ENCODE measurements at regions of chr2 and their contacts with region 1.

Region 1: DNA sequence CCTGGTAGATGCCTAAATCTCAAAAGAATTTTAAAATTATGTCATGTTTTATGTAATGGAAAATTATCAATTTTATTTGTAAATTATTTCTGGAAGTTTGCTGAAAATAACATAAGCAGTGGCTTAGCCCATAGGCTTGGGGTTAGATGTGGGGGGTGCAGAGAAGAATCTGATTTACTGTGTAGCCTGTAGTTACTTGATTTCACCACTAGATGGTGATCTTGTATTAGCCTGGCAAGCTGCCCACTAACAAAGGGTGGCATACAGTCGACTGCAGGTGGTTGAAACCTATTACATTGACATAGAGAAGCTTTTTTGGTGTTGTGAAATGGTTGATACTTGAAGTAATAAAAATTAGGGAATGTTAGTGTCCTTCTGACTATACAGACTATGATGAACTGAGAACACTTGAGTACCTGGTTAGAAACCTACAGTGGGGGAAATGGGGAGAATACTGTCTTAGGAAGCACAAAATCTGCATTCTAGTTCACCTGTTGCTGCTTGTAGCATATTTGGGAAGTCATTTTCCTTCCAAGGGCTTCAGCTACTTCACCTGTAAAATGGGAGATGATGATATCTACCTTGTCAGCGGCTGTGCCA is 191.0 kb upstream of the LHCGR start:
- DNase-seq: peak; percentile 31
- ATAC-seq: peak; percentile 74

Region 2: DNA sequence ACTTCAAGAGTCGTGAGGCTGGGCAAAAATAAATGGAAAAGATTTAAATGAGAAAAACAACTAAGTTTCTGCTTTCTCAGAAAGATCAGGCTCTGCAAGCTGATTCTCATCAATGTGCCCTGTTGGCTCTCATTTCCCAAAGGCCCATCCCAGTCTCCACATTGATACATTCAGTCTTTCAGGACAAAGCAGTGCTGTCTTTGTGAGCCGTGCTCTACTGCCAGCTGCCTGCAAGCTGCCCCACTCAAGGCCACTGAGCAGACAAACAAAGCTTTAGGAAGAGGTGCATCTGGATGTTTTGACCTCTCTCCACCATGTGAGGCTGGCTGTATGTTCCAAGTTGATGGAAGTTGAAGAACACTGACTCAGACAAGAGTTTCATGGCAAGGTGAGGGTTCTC is 159.0 kb after region 1 on chr2:
- intact Hi-C with region 1: no loop called
- DNase-seq: no peak
- ATAC-seq: no peak

Region 3: DNA sequence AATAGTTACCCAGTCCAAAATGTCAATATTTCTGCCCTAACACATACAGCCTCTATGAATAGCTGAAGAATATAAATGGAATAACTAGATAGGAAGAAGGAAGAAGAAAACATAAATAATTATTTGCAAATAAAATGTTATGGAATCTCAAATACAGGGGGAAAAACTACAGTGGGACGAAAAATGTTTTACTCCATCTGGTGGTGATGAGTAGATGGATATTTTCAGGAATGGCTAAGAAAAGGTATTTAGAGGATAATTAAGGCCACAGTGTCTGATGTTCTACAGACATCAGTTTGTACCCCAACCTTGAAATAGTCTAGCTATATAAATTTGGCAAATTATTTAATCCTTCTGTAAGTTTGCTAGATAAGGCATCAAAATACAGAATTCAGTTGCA is 385.9 kb after region 1 on chr2:
- intact Hi-C with region 1: loop called in 1 of 2 experiments (anchors 2 kb)
- DNase-seq: no peak
- ATAC-seq: no peak

Region 4: GRCh38 chr2:49753344-49753985 is 806.9 kb after region 1 on chr2:
- intact Hi-C with region 1: loop called in 1 of 2 experiments (anchors 10 kb)
- DNase-seq: no peak
- ATAC-seq: no peak

Measured in left cardiac atrium (tissue), 4 donors.